ENCODE measurements at regions of chr3 and their contacts with region 1.

Region 1: DNA sequence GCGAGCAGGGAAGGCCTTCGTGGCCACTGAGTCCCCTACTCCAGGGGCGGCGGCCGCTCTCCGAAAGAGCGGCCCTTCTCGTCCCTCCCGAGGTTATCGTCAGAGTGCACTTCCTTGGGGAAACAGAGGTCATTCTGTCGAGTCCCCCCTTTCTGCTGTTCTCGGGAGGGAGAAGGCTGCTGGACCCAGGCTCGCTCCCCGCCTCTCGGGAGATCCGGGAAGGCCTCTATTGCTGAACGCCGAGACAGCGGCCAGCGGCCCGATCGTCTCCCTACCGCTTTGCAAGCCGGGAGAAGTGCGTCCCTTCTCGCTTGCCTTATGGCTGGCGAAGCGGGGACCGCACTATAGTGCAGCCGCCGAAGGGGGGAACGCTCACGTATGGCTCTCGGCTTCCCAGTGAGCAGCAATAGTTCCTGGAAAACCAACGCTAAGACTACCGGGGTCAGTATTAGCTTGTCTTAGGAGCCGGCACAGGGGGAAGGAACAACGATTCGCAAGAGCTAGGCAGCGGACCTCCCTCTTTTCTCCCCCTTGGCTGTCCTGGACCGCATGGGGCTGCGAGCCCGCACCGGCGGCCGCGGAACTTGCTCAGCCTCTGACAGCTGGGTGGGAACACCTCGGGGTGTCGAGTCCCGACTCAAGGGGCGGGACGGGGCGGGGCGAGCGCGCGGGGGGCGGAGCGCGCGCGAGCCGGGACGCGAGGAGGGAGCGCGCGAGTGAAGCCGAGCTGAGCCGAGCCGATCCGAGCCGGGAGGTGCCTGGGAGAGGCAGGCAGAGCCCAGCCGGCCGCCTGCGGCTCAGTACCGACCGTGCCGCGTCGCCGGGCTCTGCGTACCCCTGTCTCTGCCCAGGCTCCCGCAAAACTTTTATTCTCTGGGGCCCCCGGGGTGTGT is 930 bp upstream of the PPM1L start:
- DNase-seq: peak; percentile 94 to 98 (median 97)
- ATAC-seq: peak; percentile 98
- H3K4me3 ChIP-seq: peak overlapping the region; percentile 78
- H3K27ac ChIP-seq: peak overlapping the region; percentile 97
- H3K4me1 ChIP-seq: no peaks in the 10 kb centered on the region
- H3K27me3 ChIP-seq: no peaks in the 10 kb centered on the region

Region 2: DNA sequence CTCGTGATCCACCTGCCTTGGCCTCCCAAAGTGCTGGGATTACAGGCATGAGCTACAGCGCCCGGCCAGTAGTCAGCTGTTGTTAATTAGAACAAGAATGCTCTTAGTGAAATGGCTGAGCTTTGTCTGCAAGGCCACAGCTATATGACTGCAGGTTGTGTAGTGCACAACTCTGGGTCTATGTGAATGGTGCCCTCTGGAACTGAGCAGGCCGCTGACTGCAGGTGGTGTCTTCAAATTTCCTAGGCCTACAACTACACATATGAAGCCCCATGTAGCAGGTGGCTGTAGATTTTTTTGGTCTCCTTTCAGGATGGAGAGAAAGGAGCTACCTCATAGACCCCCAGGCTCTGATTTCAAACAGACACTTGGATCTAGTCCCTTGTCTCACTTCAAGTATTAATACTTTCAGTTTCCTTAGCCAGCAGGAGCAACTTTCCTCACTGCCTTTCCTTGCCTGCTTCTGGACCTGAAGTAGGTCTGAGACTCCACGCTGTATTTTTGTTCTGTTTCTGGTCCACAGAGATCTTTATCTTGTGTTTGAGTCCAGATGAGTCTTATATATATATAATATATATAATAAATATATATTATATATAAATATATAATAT is 443.0 kb before region 1 on chr3:
- intact Hi-C with region 1: no loop called
- DNase-seq: no peak
- ATAC-seq: no peak
- H3K4me3 ChIP-seq: no peak overlapping the region
- H3K27ac ChIP-seq: no peak overlapping the region
- H3K4me1 ChIP-seq: no peaks in the 10 kb centered on the region
- H3K27me3 ChIP-seq: no peaks in the 10 kb centered on the region

Region 3: DNA sequence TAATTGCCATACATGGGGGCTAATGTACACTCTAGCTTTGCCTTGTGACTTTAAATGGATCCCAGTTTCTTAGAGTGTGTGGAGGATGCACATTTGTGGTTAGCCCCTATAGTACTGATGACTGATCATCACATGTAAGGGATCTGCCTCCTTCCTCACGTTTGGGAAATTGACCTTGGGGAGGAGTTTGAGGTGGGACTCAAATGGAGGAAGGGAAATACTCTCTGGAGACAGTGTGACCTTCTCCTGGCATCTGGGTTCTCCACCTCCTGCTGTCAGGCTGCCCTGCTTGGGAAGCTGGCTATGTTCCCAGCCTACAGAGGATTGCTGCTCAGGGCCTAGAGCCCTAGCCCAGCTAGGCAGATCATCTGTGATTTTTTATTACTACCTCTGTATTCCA is 49.7 kb after region 1 on chr3:
- intact Hi-C with region 1: loop called in 1 of 4 experiments (anchors 5 kb)
- DNase-seq: peak; percentile 53 to 80 (median 77)
- ATAC-seq: peak; percentile 73 to 78
- H3K4me3 ChIP-seq: no peak overlapping the region
- H3K27ac ChIP-seq: peak overlapping the region; percentile 98
- H3K4me1 ChIP-seq: peaks cover 16% of the 10 kb centered on the region
- H3K27me3 ChIP-seq: no peaks in the 10 kb centered on the region

Region 4: DNA sequence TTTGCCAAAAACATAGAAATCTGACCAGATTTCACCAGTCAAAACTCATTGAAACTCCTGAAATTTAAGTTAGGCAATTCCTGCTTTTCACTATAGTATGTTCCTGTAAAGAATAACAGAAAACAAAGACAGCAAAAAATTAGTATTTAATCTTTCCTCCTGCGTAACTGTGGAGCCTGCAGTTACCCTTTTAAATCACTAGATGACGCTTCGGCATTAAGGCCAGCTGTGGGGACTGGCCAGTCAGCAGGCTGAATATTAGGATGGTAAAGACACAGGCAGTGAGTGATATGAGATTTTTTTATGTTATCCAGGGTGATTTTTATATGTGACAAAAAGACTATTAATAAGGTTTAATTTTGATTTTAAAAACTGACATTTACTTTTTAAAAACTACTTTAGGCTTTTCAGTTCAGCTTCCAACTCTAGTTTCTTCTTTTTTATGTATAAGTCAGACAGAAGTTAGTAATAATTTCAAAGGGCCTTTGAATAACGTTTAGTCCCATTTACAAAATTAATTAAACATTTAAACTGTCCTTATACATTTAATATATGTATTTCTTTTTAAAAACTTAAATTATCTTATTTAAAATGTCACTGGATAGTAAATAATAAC is 166.0 kb after region 1 on chr3:
- intact Hi-C with region 1: loop called in 1 of 4 experiments (anchors 10 kb)
- DNase-seq: peak in 2 of 3 donors; percentile 17 to 50
- ATAC-seq: peak; percentile 76 to 80
- H3K4me3 ChIP-seq: no peak overlapping the region
- H3K27ac ChIP-seq: no peak overlapping the region
- H3K4me1 ChIP-seq: no peaks in the 10 kb centered on the region
- H3K27me3 ChIP-seq: no peaks in the 10 kb centered on the region

Measured in right cardiac atrium (tissue), 5 donors.